PC-3 (cell line): ENCODE measurements at regions of chr11 and their contacts with region 1.

Region 1: GRCh38 chr11:28836285-28837081 is 728.3 kb downstream of the METTL15 start:
- DNase-seq: peak; percentile 90
- ATAC-seq: peak; percentile 74
- H3K4me3 ChIP-seq: peak overlapping the region; percentile 8; the same call in 1 of the 2 replicates
- H3K27ac ChIP-seq: peak overlapping the region; percentile 94
- H3K4me1 ChIP-seq: peaks cover 62% of the 10 kb centered on the region
- H3K27me3 ChIP-seq: no peaks in the 10 kb centered on the region
- CTCF ChIP-seq: no peak

Region 2: GRCh38 chr11:28529540-28530410 is 306.7 kb before region 1 on chr11:
- CTCF ChIA-PET with region 1: no interaction called
- POLR2A ChIA-PET with region 1: no interaction called
- intact Hi-C with region 1: loop called (anchors 10 kb)
- DNase-seq: peak; percentile 83
- ATAC-seq: peak; percentile 65
- H3K4me3 ChIP-seq: no peak overlapping the region
- H3K27ac ChIP-seq: no peak overlapping the region
- H3K4me1 ChIP-seq: peaks cover 7% of the 10 kb centered on the region
- H3K27me3 ChIP-seq: no peaks in the 10 kb centered on the region
- CTCF ChIP-seq: peak; percentile 68

Region 3: GRCh38 chr11:28730336-28730735 is 106.1 kb before region 1 on chr11:
- CTCF ChIA-PET with region 1: no interaction called
- POLR2A ChIA-PET with region 1: no interaction called
- intact Hi-C with region 1: no loop called
- DNase-seq: peak; percentile 44
- ATAC-seq: no peak
- H3K4me3 ChIP-seq: no peak overlapping the region
- H3K27ac ChIP-seq: no peak overlapping the region
- H3K4me1 ChIP-seq: no peaks in the 10 kb centered on the region
- H3K27me3 ChIP-seq: no peaks in the 10 kb centered on the region
- CTCF ChIP-seq: no peak

Region 4: DNA sequence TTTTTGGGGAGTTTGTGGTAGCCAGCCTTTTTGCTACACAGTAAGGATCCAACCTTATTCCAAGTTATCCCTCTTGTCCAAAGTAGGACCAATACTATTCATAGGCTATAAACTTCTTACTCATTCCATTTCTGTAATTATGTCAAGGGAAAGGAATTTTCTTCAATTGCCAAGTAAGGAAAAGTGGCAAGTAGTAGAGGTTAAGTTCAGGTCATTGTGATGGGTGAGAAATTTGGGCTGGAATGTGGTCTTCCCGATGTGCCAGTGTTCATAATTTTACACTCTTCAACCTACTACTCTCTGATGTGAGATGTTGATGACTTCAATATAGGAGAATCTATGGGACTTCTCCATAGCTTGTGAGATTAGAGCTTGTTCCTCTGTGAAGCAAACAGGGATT is 79.5 kb before region 1 on chr11:
- CTCF ChIA-PET with region 1: no interaction called
- POLR2A ChIA-PET with region 1: no interaction called
- intact Hi-C with region 1: loop called (anchors 2 kb)
- DNase-seq: peak; percentile 89
- ATAC-seq: peak; percentile 59
- H3K4me3 ChIP-seq: peak overlapping the region; percentile 16; the same call in 1 of the 2 replicates
- H3K27ac ChIP-seq: peak overlapping the region; percentile 79
- H3K4me1 ChIP-seq: peaks cover 66% of the 10 kb centered on the region
- H3K27me3 ChIP-seq: no peaks in the 10 kb centered on the region
- CTCF ChIP-seq: no peak

Region 5: GRCh38 chr11:28773606-28774005 is 62.9 kb before region 1 on chr11:
- CTCF ChIA-PET with region 1: no interaction called
- POLR2A ChIA-PET with region 1: no interaction called
- intact Hi-C with region 1: no loop called
- DNase-seq: no peak
- ATAC-seq: no peak
- H3K4me3 ChIP-seq: no peak overlapping the region
- H3K27ac ChIP-seq: no peak overlapping the region
- H3K4me1 ChIP-seq: no peaks in the 10 kb centered on the region
- H3K27me3 ChIP-seq: no peaks in the 10 kb centered on the region
- CTCF ChIP-seq: no peak